ENCODE measurements at regions of chr19 and their contacts with region 1.

Region 1: DNA sequence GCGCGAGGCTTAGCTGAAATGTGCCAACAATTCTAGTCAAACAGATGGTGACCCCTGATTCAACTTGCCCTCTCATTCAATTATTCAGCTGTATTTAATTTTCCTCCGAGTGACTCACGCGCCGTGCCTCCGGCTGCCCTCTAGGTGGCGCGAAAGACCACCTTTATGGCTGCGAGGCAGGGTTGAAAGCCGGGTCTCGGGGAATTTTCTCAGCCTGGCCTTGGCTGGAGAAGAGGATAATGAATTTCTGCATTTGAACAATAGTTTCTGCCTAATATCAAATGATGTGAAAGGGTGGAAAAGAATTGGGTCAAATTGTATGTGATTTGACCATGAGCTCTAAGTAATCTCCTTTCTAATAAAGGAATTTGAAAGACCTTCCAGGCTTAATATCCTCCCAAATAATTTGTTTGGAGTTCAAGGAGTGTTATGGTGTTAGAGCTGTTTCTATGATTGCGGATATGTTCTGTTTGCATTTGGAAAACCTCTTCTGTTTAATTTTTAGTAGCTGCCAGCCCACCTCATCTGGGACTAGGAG is 310.9 kb downstream of the ZNF536 start:
- DNase-seq: peak; percentile 35 to 41
- ATAC-seq: peak; percentile 74 to 81
- H3K4me3 ChIP-seq: no peak overlapping the region
- H3K27ac ChIP-seq: no peak overlapping the region
- H3K4me1 ChIP-seq: no peaks in the 10 kb centered on the region
- H3K27me3 ChIP-seq: no peaks in the 10 kb centered on the region
- CTCF ChIP-seq: peak; percentile 68 to 88 (median 80)
- POLR2A ChIP-seq: no peak

Region 2: DNA sequence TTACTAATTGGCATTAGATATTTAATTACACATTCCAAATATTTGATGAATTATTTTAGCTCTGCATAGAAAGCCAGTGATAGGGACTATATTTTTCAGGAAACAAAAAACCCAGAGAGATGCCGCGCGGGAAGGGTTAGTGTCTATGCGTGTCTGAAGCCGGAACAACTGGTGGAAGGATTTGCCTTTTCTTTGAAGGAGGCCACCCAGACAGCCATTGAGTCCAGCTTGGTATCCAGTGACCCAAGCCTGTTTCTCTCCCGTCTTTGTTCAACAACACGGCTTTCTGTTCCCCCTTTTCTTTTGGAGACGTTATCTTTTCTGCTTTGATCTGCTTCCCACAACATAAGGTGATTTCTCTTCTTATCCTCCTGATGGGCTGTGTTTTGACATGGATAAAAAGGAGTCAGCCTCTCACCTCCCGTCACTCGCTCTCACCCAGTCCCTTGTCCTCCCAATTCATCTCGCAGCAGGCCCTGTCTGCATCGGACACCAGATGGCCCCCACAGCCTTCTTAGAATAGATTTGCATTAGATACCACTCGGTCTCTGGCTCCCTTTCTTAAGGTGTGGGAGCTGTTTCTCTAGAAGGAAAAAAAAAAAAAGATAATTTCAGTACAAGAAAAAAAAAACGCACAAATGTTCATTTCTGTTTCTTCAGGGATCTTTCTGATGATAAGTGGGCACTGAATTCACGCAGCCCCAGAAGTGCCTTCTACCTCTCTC is 50.9 kb after region 1 on chr19:
- in situ Hi-C with region 1: no loop called
- intact Hi-C with region 1: no loop called
- DNase-seq: no peak
- ATAC-seq: no peak
- H3K4me3 ChIP-seq: no peak overlapping the region
- H3K27ac ChIP-seq: no peak overlapping the region
- H3K4me1 ChIP-seq: no peaks in the 10 kb centered on the region
- H3K27me3 ChIP-seq: no peaks in the 10 kb centered on the region
- CTCF ChIP-seq: no peak
- POLR2A ChIP-seq: no peak

Region 3: GRCh38 chr19:31349160-31349881 is 666.3 kb after region 1 on chr19 and contains the start of gene TSHZ3:
- in situ Hi-C with region 1: loop called in 2 of 4 experiments (anchors 25 kb)
- intact Hi-C with region 1: no loop called
- DNase-seq: peak; percentile 46 to 48
- ATAC-seq: peak; percentile 45
- H3K4me3 ChIP-seq: peak within 1 kb of the TSS; percentile 71 to 85 (median 73)
- H3K27ac ChIP-seq: peak within 1 kb of the TSS; percentile 73 to 83 (median 76)
- H3K4me1 ChIP-seq: peaks cover 4 to 22% of the 10 kb centered on the region in 2 donors
- H3K27me3 ChIP-seq: peaks cover 20 to 41% (median 24%) of the 10 kb centered on the region in 3 donors
- CTCF ChIP-seq: no peak
- POLR2A ChIP-seq: peak; percentile 12 to 23
- total RNA-seq, gene TSHZ3: 1.6 to 2.3 (median 1.9) TPM

Region 4: DNA sequence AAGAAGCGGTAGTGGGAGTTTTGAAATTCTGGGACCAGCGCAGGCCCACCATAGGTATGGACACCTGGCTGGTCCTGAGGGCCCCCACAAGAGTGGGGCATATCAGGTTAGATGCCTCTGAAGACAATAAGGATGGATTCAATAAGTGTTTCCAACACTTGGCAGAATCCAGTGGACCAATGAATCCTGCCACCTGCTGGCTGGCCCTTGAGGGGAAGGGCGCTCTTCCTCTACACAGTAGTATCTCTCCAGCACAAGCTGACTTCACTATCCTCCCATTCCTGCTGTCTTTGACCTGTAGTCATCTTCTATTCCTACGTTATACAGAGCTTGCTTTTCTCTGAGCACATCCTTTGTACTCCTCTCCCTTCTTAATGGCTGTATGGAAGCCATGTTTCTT is 865.9 kb after region 1 on chr19:
- in situ Hi-C with region 1: loop called in 1 of 4 experiments (anchors 25 kb)
- intact Hi-C with region 1: loop called (anchors 10 kb)
- DNase-seq: no peak
- ATAC-seq: no peak
- H3K4me3 ChIP-seq: no peak overlapping the region
- H3K27ac ChIP-seq: no peak overlapping the region
- H3K4me1 ChIP-seq: no peaks in the 10 kb centered on the region
- H3K27me3 ChIP-seq: no peaks in the 10 kb centered on the region
- CTCF ChIP-seq: peak in 2 of 5 experiments; percentile 38 to 42
- POLR2A ChIP-seq: no peak

Region 5: GRCh38 chr19:32041681-32042292 is 1358.7 kb after region 1 on chr19:
- in situ Hi-C with region 1: loop called in 1 of 4 experiments (anchors 25 kb)
- intact Hi-C with region 1: no loop called
- DNase-seq: no peak
- ATAC-seq: no peak
- H3K4me3 ChIP-seq: peak overlapping the region in 3 of 4 donors; percentile 2 to 12 (median 10)
- H3K27ac ChIP-seq: no peak overlapping the region
- H3K4me1 ChIP-seq: no peaks in the 10 kb centered on the region
- H3K27me3 ChIP-seq: peaks cover 10 to 18% (median 18%) of the 10 kb centered on the region in 3 donors
- CTCF ChIP-seq: peak in 3 of 5 experiments; percentile 23 to 51 (median 24)
- POLR2A ChIP-seq: no peak

Region 6: GRCh38 chr19:32224371-32225244 is 1541.5 kb after region 1 on chr19:
- in situ Hi-C with region 1: no loop called
- intact Hi-C with region 1: loop called (anchors 1 kb)
- DNase-seq: peak in 1 of 2 donors; percentile 12
- ATAC-seq: peak; percentile 73 to 80
- H3K4me3 ChIP-seq: peak overlapping the region in 2 of 4 donors; percentile 29 to 35
- H3K27ac ChIP-seq: no peak overlapping the region
- H3K4me1 ChIP-seq: no peaks in the 10 kb centered on the region
- H3K27me3 ChIP-seq: no peaks in the 10 kb centered on the region
- CTCF ChIP-seq: peak; percentile 76 to 99 (median 88)
- POLR2A ChIP-seq: no peak

Measured in gastrocnemius medialis (tissue), 4 donors.